Dendritic cell treated with granulocyte-macrophage colony-stimulating factor and Interleukin-4, amounts not matched to agents 40 ng/mL and 50 ng/mL, for 4 days (primary cell): ENCODE measurements at regions of chr3 and their contacts with region 1.

Region 1: DNA sequence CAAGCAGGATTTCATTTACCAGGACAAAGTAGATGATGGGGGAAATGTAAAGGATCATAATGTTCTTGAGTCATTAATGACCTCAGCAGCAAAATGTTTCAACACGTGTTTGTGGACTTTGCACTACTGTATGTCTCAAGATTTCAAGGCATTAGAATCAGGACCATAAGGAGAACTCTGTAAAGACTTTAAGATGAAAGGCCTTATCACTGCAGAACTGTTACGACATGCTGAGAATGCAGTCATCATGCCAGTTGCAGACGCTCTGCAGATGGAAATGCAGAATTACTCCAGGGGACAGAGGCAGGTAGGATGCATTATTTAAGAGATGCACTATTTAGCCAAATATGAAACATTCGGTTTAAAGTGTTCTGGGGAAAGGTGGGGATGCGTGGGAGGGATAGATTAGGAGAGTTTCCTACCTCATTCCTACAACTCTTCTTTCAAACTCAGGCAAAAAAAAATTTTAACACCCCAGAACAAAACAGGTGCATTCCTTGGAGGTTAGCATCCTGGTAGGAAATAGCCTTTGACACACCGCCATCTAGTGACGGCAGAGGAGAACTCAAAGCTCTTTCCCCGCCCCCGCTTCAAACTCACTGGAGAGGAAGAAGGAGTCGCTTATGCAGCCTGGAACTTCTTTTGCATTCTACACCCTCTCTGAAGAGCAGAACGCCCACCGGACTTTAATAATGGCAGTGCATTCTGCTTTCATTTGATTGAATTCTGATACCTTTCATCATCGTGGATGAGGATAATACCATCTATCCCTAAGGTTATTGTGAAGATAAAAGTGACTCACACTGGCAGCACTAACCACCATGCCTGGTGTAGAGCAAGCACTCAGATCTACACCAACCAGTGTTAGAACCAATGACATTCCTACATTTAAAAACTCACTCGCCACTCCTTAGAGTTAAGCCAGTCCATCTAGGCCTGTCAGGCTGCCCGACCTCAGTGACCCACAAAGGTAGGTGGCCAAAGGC is 43.1 kb upstream of the TOPAZ1 start:
- H3K4me3 Mint-ChIP-seq: no peak overlapping the region
- H3K27ac Mint-ChIP-seq: no peak overlapping the region
- H3K4me1 Mint-ChIP-seq: no peaks in the 10 kb centered on the region
- H3K27me3 Mint-ChIP-seq: peaks cover 2% of the 10 kb centered on the region

Region 2: GRCh38 chr3:43540624-43541023 is 658.0 kb before region 1 on chr3:
- intact Hi-C with region 1: loop called (anchors 2 kb)
- H3K4me3 Mint-ChIP-seq: no peak overlapping the region
- H3K27ac Mint-ChIP-seq: no peak overlapping the region
- H3K4me1 Mint-ChIP-seq: no peaks in the 10 kb centered on the region
- H3K27me3 Mint-ChIP-seq: no peaks in the 10 kb centered on the region

Region 3: GRCh38 chr3:43769471-43770425 is 428.8 kb before region 1 on chr3:
- intact Hi-C with region 1: loop called (anchors 2 kb)
- H3K4me3 Mint-ChIP-seq: peak overlapping the region; percentile 57
- H3K27ac Mint-ChIP-seq: peak overlapping the region; percentile 41
- H3K4me1 Mint-ChIP-seq: peaks cover 54% of the 10 kb centered on the region
- H3K27me3 Mint-ChIP-seq: peaks cover 6% of the 10 kb centered on the region

Region 4: GRCh38 chr3:43855674-43856299 is 342.8 kb before region 1 on chr3:
- intact Hi-C with region 1: loop called (anchors 5 kb)
- H3K4me3 Mint-ChIP-seq: no peak overlapping the region
- H3K27ac Mint-ChIP-seq: no peak overlapping the region
- H3K4me1 Mint-ChIP-seq: peaks cover 7% of the 10 kb centered on the region
- H3K27me3 Mint-ChIP-seq: peaks cover 48% of the 10 kb centered on the region

Region 5: DNA sequence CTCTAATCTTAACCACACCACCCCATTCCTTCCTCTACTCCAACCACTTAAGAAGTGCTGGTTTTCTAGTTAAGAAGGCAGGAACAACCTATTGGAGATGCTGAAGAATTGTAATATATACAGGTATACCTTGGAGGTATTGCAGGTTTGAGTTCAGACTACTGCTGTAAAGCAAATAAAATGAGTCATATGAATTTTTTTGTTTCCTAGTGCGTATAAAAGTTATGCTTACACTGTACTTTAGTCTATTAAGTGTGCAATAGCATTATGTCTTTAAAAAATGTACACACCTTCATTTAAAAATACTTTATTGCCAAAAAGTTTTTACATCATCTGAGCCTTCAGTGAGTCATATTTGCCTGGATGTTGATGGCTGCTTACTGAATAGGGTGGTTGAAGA is 65.6 kb after region 1 on chr3:
- intact Hi-C with region 1: no loop called
- H3K4me3 Mint-ChIP-seq: no peak overlapping the region
- H3K27ac Mint-ChIP-seq: no peak overlapping the region
- H3K4me1 Mint-ChIP-seq: no peaks in the 10 kb centered on the region
- H3K27me3 Mint-ChIP-seq: no peaks in the 10 kb centered on the region